ENCODE measurements at regions of chr2 and their contacts with region 1.

Region 1: DNA sequence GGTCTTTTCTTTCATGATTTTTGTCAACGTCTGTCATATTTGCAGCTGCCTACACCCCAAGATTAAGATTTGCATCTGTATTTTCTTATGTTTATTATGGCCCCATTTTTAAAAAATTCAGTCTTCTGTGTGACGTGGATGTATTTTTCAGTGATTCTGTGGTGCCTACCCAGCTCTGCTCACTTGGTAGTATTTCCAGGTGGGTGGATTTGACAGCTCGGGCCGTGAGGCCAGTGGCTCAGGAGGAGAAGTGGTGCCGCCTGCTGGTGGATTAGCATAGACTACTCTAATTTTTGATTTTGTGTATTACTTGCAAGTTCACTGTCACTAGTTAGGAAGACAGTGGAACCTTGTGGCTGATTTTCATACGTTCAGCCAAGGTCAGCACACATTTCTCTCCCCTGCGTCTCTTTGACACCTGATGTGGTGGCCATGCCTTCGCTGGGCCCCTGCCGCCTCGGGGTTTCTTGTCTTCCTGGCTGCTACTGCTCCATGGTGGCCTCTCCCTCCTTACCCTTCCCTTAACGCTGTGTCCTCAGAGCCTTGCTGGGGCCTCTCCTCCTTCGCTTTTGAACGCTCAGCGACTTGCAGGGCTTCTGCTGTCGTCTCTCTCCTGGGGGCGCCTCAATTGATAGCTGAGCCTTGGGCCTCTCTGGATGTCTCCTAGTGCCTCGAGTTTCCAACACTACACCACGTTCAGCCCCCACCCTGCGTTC is 89.3 kb downstream of the DGKD start:
- DNase-seq: peak; percentile 26
- H3K4me3 ChIP-seq: no peak overlapping the region
- CTCF ChIP-seq: peak; percentile 67

Region 2: DNA sequence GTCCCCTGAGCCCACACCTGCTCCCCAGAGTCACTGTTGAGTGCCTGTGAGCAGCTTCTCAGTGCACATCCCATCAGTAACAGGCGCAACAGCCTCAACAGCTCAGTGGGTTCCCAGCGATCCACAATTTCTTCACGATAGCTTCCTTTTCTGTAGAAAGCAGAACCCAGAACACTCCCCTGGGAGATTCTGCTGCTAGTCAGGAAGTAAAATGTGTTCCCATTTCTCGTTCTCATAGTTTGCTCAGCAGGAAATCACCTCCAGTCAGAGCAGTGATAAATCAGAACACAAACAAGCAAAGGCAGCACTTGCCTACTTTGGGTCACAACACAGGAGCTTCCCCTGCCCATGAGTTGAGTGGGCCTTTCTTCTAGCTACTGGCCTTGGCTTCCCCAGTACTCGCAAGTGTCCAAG is 241.1 kb before region 1 on chr2:
- CTCF ChIA-PET with region 1: no interaction called
- POLR2A ChIA-PET with region 1: no interaction called
- DNase-seq: no peak
- H3K4me3 ChIP-seq: no peak overlapping the region
- CTCF ChIP-seq: no peak

Region 3: GRCh38 chr2:233353769-233354499 is 89.7 kb before region 1 on chr2 and contains the start of gene DGKD:
- CTCF ChIA-PET with region 1: interaction called, 21 read pairs
- POLR2A ChIA-PET with region 1: no interaction called
- DNase-seq: no peak
- H3K4me3 ChIP-seq: peak within 1 kb of the TSS; percentile 68
- CTCF ChIP-seq: peak; percentile 45

Region 4: DNA sequence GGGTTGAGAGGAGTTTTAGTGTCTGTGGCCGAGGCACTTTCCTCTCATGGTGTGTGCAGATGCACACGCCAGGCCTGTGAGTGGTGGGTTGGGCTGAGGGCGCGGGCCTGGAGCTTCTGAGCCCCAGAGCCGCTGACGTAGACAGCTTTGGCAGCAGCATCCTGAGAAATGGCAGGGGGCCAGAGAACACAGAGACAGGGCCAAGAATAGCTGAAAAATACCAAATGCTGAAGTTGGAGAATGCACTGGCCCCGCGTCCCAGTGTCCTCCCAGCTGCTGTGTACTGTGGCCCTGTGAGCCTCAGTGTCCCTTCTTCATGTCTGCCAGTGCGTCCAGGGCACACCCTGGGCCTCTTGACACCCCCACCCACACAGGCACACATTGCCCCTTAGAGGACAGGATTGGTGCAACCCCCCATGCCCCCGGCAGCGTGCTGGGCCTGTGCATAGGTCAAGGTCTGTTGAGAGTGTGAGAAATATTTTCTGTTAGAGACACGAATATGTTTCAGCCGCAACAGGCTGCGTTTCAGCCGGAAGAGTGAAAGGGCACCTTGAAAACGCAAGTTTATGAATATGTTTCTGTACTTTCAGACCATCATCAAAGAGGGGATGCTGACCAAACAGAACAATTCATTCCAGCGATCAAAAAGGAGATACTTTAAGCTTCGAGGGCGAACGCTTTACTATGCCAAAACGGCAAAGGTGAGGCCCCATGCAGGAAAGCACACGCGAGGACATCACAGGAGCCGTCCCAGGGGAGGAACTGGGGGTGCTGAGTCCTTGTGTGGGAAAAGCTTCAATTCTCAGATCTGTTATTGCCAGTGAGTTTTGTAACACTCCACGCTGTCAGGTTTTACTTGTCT is 55.7 kb before region 1 on chr2:
- CTCF ChIA-PET with region 1: interaction called, 10 read pairs
- POLR2A ChIA-PET with region 1: no interaction called
- DNase-seq: peak; percentile 79
- H3K4me3 ChIP-seq: no peak overlapping the region
- CTCF ChIP-seq: no peak

Region 5: DNA sequence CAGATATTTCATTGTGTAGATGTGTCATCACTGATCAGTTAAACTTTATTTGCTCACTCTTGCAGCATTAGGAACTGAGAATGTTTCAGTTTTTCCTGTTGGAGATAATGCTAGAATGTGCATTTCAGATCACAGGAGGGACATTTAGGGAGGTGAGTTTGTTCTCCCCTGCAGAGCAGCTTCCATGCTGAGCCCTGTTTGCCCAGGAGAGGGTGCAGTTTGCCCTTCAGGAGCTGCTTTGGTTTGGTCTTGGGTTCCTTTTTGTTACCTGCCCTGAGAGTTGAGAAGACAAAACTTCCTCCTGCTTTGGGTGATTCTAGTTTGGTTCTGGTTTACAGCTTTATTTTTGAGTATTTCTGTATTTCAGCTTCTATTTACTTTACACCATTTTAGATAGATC is 39.4 kb before region 1 on chr2:
- CTCF ChIA-PET with region 1: interaction called, 117 read pairs
- POLR2A ChIA-PET with region 1: no interaction called
- DNase-seq: no peak
- H3K4me3 ChIP-seq: no peak overlapping the region
- CTCF ChIP-seq: peak; percentile 77

Region 6: DNA sequence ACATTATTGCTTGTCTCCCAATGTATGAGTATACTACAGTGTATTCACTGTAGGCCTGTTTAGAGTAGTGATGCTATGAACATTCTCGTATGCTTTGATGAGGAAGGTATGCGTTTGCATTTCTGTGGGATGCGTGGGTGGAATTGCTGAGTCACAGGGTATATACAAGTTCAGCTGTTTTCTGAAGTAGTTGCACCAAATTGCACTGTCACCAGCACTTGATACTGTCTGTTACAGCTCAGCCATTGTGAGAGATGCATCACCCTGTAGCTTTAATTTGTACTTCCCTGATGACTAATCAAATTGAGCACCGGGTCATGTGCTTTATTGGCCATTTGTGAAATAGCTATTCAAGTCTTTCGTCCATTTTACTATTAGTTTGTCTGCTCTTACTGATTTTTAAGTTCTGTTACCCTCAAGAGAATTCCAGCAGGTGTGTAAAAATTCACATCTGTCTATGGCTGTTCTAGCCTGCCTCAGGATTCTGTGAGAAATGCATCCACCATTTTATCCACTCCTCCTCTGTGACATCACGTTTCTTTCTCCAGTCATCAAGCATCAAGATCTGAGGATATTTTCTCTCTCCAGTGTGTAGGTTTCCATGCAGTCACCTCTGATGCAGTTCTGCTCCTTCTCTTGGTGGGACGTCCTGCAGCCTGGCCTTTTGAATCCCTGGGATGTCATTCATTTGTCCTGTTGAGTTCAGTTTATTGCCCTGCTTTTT is 16.8 kb before region 1 on chr2:
- CTCF ChIA-PET with region 1: interaction called, 48 read pairs
- POLR2A ChIA-PET with region 1: no interaction called
- DNase-seq: peak; percentile 71
- H3K4me3 ChIP-seq: no peak overlapping the region
- CTCF ChIP-seq: no peak

Region 7: GRCh38 chr2:233455006-233455405 is 11.4 kb after region 1 on chr2:
- CTCF ChIA-PET with region 1: interaction called, 55 read pairs
- POLR2A ChIA-PET with region 1: no interaction called
- DNase-seq: no peak
- H3K4me3 ChIP-seq: no peak overlapping the region
- CTCF ChIP-seq: no peak

Region 8: DNA sequence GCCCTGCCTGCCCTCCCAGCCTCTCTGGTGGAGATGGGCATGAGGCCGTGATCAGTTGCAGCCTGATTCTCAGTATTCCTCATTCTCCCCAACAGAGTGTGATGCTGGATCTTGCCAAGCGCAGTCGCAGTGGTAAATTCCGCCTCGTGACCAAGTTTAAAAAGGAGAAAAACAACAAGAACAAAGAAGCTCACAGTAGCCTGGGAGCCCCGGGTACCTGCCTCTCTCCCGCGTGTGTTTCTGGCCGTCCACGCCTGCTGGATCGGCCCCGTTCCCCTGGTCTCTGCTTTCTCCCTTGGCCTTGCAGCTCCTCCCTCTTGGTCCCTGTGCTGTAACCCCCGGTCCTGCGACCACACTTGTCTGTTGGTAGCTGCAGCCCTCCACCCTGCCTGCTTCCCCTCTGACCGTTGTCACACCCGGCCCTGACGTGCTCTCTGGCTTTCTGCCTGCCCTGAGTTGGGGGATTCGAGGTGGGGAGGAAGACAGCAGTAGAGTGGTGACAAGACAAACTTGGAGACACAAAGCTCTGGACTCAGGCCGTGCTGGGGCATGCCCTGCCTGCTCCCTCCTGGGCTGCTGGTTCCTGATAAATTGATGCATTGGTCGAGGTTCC is 23.5 kb after region 1 on chr2:
- CTCF ChIA-PET with region 1: interaction called, 12 read pairs
- POLR2A ChIA-PET with region 1: no interaction called
- DNase-seq: no peak
- H3K4me3 ChIP-seq: no peak overlapping the region
- CTCF ChIP-seq: no peak